Ovary (tissue), 10 donors: ENCODE measurements at regions of chr5 and their contacts with region 1.

Region 1: GRCh38 chr5:38556599-38557305 is at the start of gene LIFR:
- DNase-seq: peak; percentile 84 to 92 (median 88)
- H3K4me3 ChIP-seq: peak within 1 kb of the TSS; percentile 93
- H3K27ac ChIP-seq: peak within 1 kb of the TSS; percentile 92 to 96
- H3K4me1 ChIP-seq: no peaks in the 10 kb centered on the region
- H3K27me3 ChIP-seq: no peaks in the 10 kb centered on the region
- CTCF ChIP-seq: no peak
- EP300 ChIP-seq: no peak
- POLR2A ChIP-seq: peak; percentile 77
- total RNA-seq, gene LIFR: 67.1 to 143 (median 89.8) TPM

Region 2: DNA sequence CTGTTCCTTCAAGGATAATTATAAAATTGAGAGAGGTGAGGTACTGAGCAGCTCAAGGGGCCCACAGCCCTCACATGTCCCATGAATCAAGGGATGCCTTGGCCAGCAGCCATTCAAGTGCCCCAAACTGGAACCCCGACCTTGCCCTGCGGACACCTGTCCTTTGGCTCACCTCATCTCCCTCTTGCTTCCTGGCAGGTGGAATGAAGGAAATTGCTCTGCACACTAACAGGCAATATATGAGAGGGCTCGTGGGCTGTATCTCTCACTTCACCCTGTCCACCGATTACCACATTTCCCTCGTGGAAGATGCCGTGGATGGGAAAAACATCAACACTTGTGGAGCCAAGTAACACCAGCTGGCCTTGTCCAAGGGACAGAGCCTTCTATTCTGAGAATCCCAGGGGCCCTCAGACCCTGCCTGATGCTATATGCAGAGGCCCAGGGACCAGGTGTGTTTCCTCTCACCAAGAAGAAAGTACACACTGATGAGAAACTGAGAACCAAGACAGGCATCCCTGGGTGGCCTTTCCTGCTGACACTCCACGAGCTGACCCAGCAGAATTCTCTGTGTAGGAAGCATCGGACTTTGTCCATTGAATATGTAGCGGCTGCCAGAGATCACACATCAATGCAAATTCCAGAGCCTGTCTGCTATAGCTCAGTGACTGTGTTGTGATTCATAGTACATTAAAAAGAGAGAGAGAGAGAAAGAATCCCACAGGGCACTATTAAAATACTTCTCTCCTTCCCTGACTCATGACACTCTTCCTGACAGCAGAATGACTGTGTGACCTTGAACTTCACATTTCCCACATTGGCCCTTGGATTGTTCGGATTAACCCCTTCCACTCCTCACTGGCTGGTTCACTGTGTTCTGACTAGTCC is 92.9 kb before region 1 on chr5:
- intact Hi-C with region 1: loop called in 2 of 4 experiments (anchors 2 to 10 kb)
- DNase-seq: peak; percentile 43 to 61 (median 56)
- H3K4me3 ChIP-seq: no peak overlapping the region
- H3K27ac ChIP-seq: peak overlapping the region; percentile 55 to 94
- H3K4me1 ChIP-seq: peaks cover 39% of the 10 kb centered on the region
- H3K27me3 ChIP-seq: no peaks in the 10 kb centered on the region
- CTCF ChIP-seq: no peak
- EP300 ChIP-seq: peak; percentile 43
- POLR2A ChIP-seq: no peak